Endothelial cell of umbilical vein (primary cell): ENCODE measurements at regions of chr5 and their contacts with region 1.

Region 1: DNA sequence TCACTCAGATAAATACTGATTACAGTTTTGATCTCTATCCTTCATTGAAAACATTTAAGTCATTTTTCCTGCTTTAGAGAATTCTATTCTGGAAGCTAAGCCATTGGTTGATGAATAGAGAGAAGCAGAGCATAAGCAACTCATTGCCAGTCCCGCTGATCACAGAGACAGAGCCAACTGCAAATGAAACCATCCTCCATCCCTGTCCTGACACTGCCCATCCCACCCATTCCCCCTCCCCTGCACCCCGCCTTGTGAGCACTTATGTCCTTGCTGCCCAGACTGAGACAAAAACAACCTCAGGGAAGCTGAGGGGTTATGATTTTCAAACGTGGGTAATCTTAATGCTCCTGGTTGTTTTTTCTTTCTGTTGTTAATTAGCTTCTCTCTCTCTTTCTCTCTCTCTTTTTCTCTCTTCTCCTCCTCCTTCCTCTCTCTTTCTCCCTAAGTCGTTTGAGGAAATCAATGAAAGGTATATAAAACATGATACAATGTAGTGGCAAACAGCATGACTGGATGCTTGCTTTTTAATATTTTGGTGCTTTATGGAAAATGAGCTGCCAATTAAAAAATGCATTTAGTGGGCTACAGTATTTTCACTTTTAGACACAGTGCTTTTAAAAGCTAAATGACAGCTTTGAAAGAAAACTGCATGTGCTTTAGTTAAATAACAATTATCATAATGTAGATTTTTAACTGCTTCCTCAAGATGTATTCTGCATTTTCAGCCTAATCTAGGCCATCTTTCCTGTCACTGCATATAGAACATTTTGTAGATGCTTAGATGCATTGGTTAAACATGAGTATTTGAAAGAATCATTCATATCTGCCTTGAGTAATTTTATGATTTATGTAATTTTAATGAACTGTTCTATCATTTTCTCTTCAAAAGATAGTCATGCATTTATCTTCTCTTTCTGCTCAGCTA is 57.3 kb downstream of the CMYA5 start:
- DNase-seq: no peak
- H3K4me3 ChIP-seq: no peak overlapping the region
- H3K27ac ChIP-seq: no peak overlapping the region
- H3K4me1 ChIP-seq: no peaks in the 10 kb centered on the region
- H3K27me3 ChIP-seq: peaks cover 0 to 6% of the 10 kb centered on the region in 2 experiments
- CTCF ChIP-seq: no peak
- POLR2A ChIP-seq: no peak

Region 2: GRCh38 chr5:79785983-79786382 is 39.1 kb after region 1 on chr5:
- CTCF ChIA-PET with region 1: no interaction called
- POLR2A ChIA-PET with region 1: no interaction called
- dilution Hi-C with region 1: no loop called
- intact Hi-C with region 1: no loop called
- DNase-seq: no peak
- H3K4me3 ChIP-seq: no peak overlapping the region
- H3K27ac ChIP-seq: no peak overlapping the region
- H3K4me1 ChIP-seq: no peaks in the 10 kb centered on the region
- H3K27me3 ChIP-seq: no peaks in the 10 kb centered on the region
- CTCF ChIP-seq: no peak
- POLR2A ChIP-seq: no peak

Region 3: GRCh38 chr5:80008995-80009765 is 262.3 kb after region 1 on chr5:
- CTCF ChIA-PET with region 1: no interaction called
- POLR2A ChIA-PET with region 1: interaction called, 14 read pairs
- dilution Hi-C with region 1: no loop called
- intact Hi-C with region 1: no loop called
- DNase-seq: no peak
- H3K4me3 ChIP-seq: no peak overlapping the region
- H3K27ac ChIP-seq: no peak overlapping the region
- H3K4me1 ChIP-seq: no peaks in the 10 kb centered on the region
- H3K27me3 ChIP-seq: no peaks in the 10 kb centered on the region
- CTCF ChIP-seq: no peak
- POLR2A ChIP-seq: no peak